ENCODE measurements at regions of chr1 and their contacts with region 1.

Region 1: DNA sequence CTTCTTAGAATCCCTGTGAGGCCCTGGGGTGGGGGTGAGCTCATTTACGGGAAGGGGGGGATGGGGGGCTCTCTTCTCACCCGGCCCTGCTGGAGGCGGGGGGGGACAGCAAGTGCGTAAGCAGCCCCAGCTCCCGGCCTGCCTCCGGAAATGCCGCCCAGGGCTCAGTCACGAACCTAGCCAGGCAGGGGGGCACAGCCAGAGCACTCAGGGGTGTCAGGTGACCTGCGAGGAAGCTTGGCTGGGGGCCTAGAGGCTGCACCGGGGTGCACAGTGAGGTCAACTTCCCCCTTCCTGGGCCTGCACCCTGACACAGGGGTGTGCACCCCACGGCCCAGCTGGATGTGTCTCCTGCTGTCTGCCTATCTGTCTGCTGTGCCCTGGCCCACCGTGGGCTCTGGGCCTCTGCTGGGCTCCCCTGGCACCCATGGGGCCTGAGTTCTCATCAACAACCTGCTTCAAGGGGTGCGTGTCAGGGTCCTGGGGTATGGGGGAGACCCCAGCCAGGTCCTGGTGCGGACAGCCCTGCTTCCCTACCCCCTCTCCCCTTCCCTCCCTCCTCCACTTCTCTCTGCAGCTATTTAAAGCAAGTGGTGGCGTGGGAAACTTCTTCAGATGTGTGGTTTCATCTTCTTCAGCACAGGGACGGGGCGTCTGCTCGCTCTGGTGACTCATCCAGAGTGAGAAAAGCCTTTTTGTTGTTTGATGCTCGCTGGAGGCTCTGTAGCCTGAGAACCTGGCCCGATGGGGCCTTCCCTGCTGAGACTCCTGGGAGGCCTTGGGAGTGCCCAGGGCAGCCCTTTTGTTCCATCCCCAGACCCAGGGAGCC is 92.5 kb upstream of the RUNX3 start:
- DNase-seq: peak; percentile 86
- H3K4me3 ChIP-seq: peak overlapping the region; percentile 55
- H3K27ac ChIP-seq: peak overlapping the region; percentile 80
- H3K4me1 ChIP-seq: peaks cover 68% of the 10 kb centered on the region
- CTCF ChIP-seq: no peak

Region 2: DNA sequence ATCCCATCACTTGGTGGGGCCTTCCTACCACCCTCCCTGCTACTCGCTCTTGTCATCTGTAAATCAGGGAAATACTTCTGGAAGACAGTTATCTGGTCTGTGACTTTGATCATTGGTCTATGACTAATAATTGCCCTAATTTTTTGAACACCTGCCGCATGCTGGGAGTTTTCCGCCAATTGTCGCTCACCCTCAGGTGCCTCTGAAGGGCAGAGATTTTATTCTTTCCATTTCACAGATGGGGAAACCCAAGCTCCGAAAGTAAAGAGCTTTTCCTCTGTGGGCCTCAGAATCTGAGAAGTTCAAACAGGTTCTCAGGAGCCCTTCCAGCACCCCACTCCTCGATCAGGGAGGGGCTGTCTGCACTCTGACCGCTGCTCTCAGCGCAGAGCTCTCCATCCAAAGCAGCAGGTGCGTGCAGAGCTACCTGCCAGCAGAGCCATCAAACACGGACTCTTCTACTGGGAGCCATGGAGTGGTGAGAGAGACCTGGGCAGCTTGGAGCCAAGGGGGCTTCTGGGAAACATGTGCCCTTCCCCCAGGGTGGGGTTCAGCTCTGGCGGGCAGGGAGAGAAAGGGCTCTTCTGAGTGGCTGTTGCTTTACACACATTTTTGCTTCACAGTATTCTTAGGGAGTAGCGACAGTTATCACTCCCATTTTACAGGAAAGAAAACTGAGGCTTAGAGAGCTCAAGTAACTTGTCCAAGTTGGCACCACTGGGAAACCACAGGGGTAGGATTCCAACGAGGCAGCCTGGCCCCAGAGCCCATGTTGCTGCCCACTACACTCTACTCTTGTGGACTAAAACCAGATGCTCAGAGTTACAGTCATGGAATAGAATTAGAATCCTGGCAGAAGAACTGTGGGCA is 86.7 kb before region 1 on chr1:
- CTCF ChIA-PET with region 1: interaction called, 12 read pairs
- POLR2A ChIA-PET with region 1: interaction called, 3 read pairs
- intact Hi-C with region 1: no loop called
- DNase-seq: peak; percentile 29
- H3K4me3 ChIP-seq: peak overlapping the region; percentile 5
- H3K27ac ChIP-seq: no peak overlapping the region
- H3K4me1 ChIP-seq: peaks cover 46% of the 10 kb centered on the region
- CTCF ChIP-seq: no peak